HEK293 (cell line): ENCODE measurements at regions of chr2 and their contacts with region 1.

Region 1: GRCh38 chr2:20446917-20447436 is at the start of gene RHOB:
- H3K4me3 ChIP-seq: peak within 1 kb of the TSS; percentile 90
- H3K27ac ChIP-seq: peak within 1 kb of the TSS; percentile 95
- H3K4me1 ChIP-seq: peaks cover 9% of the 10 kb centered on the region
- CTCF ChIP-seq: no peak

Region 2: GRCh38 chr2:20148923-20149668 is 297.9 kb before region 1 on chr2:
- CTCF ChIA-PET with region 1: no interaction called
- POLR2A ChIA-PET with region 1: no interaction called
- H3K4me3 ChIP-seq: no peak overlapping the region
- H3K27ac ChIP-seq: no peak overlapping the region
- H3K4me1 ChIP-seq: no peaks in the 10 kb centered on the region; the same call in 1 of the 2 replicates
- CTCF ChIP-seq: no peak

Region 3: GRCh38 chr2:20411361-20411894 is 35.5 kb before region 1 on chr2:
- CTCF ChIA-PET with region 1: interaction called, 23 read pairs
- POLR2A ChIA-PET with region 1: interaction called, 25 read pairs
- H3K4me3 ChIP-seq: no peak overlapping the region
- H3K27ac ChIP-seq: no peak overlapping the region
- H3K4me1 ChIP-seq: no peaks in the 10 kb centered on the region
- CTCF ChIP-seq: peak; percentile 45; the same call in 1 of the 2 replicates

Region 4: DNA sequence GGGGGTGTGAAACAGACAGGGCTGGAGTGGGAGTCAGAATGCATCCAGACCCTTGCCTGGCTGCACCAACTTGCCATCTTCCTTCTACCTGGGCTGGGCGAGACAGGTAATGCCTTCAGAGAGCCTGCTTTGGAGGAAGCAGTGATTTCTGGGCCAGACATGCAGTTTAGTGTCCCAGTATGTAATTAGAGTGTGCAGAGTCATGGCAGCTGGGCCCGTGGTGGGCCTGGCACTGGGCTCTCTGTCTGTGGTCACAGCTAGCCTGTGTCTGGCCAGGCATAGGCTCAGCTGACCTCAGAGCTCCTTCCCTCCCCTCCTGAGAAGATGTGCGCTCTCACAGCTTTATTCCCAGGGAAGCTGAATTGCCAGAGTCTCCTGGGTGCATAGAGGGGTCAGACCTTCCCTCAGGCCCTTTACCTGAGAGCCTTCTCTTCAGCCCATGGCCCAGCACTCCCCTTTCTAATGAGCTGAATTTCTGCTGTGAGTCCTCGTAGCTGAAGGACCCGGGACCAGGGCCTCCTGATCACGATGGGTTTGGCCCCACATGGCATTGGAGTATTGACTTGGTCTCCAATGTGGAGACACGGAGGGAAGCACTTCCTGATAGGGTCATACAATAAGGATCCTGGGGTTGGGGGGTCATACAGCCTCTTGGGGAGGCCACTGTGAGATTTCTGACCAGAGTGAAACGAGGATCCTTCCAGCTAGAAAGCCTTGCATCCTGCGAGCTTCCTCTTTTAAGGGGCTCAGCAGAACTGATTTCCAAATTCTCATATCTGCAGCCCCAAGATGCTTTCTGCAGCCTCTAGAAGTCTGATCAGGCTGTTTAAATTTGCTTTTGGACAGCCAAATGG is 38.5 kb after region 1 on chr2:
- CTCF ChIA-PET with region 1: interaction called, 3 read pairs
- POLR2A ChIA-PET with region 1: interaction called, 50 read pairs
- H3K4me3 ChIP-seq: no peak overlapping the region
- H3K27ac ChIP-seq: no peak overlapping the region
- H3K4me1 ChIP-seq: no peaks in the 10 kb centered on the region
- CTCF ChIP-seq: no peak

Region 5: GRCh38 chr2:20507166-20507692 is 60.3 kb after region 1 on chr2:
- CTCF ChIA-PET with region 1: interaction called, 6 read pairs
- POLR2A ChIA-PET with region 1: interaction called, 57 read pairs
- H3K4me3 ChIP-seq: no peak overlapping the region
- H3K27ac ChIP-seq: no peak overlapping the region
- H3K4me1 ChIP-seq: peaks cover 3% of the 10 kb centered on the region
- CTCF ChIP-seq: no peak

Region 6: DNA sequence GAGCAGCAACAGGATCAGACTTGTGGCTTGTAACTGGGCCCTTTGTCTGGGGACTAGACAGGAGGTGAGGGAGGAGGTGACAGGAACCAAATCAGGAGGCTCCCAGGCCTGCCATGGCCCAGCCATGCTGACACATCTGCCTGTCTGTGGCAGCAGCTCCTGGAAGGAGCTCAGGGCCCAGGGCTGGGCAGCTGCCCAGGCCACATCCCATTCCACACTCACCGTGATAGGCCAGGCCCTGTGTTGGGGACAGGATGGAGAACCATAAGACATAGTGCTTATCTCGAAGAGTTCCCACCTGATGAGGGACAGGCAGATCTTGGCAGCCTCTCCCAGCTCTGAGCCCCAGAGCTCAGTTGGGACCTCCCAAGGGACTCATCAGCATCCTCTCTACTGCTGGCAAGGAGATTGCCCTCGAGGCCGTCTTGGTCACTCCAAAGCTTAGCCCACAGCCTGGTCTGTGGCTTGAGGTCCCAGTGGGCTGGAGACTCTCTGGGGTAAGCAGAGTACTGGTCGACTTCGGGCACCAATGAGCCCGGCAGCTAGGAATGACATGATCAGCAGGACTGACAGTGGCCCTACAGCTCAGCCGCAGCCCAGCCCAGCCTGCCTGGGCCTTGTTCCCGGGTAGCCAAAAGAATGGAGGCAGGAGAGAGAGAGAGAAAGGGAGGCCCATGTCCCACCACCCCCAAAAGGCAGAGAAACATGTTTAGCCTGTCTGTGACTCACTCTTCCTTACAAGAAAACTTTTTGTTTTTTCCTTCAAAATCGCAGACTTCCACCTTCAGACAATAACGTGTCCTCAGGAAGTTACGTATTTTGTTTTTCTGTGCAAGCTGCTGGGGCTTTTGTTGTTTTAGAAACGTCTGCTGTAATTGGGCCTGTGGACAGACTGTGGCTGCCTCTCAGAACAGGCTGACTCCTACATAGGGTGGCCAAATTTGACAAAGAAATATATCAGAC is 121.8 kb after region 1 on chr2:
- CTCF ChIA-PET with region 1: interaction called, 4 read pairs
- POLR2A ChIA-PET with region 1: interaction called, 100 read pairs
- H3K4me3 ChIP-seq: no peak overlapping the region
- H3K27ac ChIP-seq: no peak overlapping the region
- H3K4me1 ChIP-seq: no peaks in the 10 kb centered on the region
- CTCF ChIP-seq: no peak

Region 7: DNA sequence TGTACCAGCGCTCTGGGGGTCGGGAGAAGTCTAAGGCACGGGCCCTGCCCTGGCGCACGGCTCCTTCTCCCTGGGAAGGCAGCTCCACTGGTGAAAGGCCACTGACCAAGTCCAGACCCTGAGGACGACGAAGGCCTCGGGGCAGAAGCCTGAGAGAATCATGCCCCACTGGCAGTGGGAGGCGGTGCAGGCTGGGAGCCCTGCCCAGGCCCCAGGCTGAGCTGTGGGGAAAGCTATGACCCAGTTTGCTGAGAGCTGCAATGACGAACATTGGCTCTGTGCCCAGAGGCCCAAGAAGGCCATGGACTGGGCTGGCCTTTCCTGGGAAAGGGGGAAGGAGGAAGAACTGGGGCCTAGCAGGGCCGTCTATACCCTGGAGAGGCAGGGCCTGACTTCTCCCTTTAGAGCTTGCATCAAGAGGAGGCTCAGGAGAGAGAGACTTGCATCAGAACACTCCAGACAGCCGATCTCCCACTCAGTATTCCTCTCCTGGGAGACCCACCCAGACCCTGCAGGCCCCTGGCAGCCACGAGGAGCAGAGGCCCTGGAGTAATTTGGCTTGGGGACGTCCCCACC is 171.0 kb after region 1 on chr2:
- CTCF ChIA-PET with region 1: interaction called, 4 read pairs
- POLR2A ChIA-PET with region 1: interaction called, 150 read pairs
- H3K4me3 ChIP-seq: no peak overlapping the region
- H3K27ac ChIP-seq: no peak overlapping the region; the same call in 1 of the 2 replicates
- H3K4me1 ChIP-seq: peaks cover 7% of the 10 kb centered on the region; the same call in 1 of the 2 replicates
- CTCF ChIP-seq: 0 out of 2 replicates have a peak, but pooled peaks have one; percentile 27

Region 8: GRCh38 chr2:20650880-20651730 is 204.1 kb after region 1 on chr2 and contains the start of gene HS1BP3:
- CTCF ChIA-PET with region 1: interaction called, 9 read pairs
- POLR2A ChIA-PET with region 1: interaction called, 51 read pairs
- H3K4me3 ChIP-seq: peak within 1 kb of the TSS; percentile 66
- H3K27ac ChIP-seq: peak within 1 kb of the TSS; percentile 43; the same call in 1 of the 2 replicates
- H3K4me1 ChIP-seq: no peaks in the 10 kb centered on the region
- CTCF ChIP-seq: no peak; the same call in 1 of the 2 replicates